HCT116 (cell line): ENCODE measurements at regions of chr7 and their contacts with region 1.

Region 1: GRCh38 chr7:110442381-110442837 is 648.5 kb upstream of the LRRN3 start:
- DNase-seq: peak; percentile 51
- ATAC-seq: peak; percentile 99
- H3K4me3 ChIP-seq: no peak overlapping the region
- H3K27ac ChIP-seq: no peak overlapping the region
- H3K4me1 ChIP-seq: no peaks in the 10 kb centered on the region
- H3K27me3 ChIP-seq: no peaks in the 10 kb centered on the region
- CTCF ChIP-seq: peak; percentile 43 to 81 (median 80); a peak in 5 of 6 replicates
- POLR2A ChIP-seq: no peak
- RAD21 ChIP-seq: peak; percentile 85

Region 2: GRCh38 chr7:108613112-108613759 is 1829.2 kb before region 1 on chr7:
- CTCF ChIA-PET with region 1: no interaction called
- POLR2A ChIA-PET with region 1: no interaction called
- RAD21 ChIA-PET with region 1: no interaction called
- intact Hi-C with region 1: loop called (anchors 10 kb)
- DNase-seq: peak; percentile 33
- ATAC-seq: peak; percentile 77
- H3K4me3 ChIP-seq: no peak overlapping the region
- H3K27ac ChIP-seq: no peak overlapping the region
- H3K4me1 ChIP-seq: no peaks in the 10 kb centered on the region
- H3K27me3 ChIP-seq: no peaks in the 10 kb centered on the region
- CTCF ChIP-seq: peak; percentile 49 to 78 (median 52)
- POLR2A ChIP-seq: no peak
- RAD21 ChIP-seq: peak; percentile 76

Region 3: DNA sequence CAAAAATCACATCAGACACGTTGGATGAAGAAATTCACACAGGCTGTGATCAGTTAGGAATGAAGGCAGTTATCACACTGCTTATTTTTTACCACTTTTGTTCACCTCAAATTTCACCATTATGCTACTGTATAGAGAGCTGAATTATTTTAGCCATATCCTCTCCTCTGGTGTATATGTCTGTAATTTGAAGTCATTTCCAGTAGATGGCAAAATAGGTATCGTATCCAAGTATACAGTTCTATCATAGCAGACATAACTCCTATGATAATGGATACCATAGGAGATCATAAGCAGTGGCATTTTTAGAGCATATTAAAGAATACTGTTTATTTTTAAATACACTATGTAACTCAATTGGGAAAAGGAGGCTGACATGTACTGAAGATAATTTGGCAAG is 963.0 kb before region 1 on chr7:
- CTCF ChIA-PET with region 1: no interaction called
- POLR2A ChIA-PET with region 1: no interaction called
- RAD21 ChIA-PET with region 1: no interaction called
- intact Hi-C with region 1: loop called (anchors 10 kb)
- DNase-seq: no peak
- ATAC-seq: peak; percentile 88
- H3K4me3 ChIP-seq: no peak overlapping the region
- H3K27ac ChIP-seq: no peak overlapping the region
- H3K4me1 ChIP-seq: no peaks in the 10 kb centered on the region
- H3K27me3 ChIP-seq: no peaks in the 10 kb centered on the region
- CTCF ChIP-seq: peak; percentile 10 to 37 (median 24); a peak in 3 of 6 replicates
- POLR2A ChIP-seq: no peak
- RAD21 ChIP-seq: peak; percentile 44

Region 4: GRCh38 chr7:109751241-109751640 is 691.2 kb before region 1 on chr7:
- CTCF ChIA-PET with region 1: no interaction called
- POLR2A ChIA-PET with region 1: no interaction called
- RAD21 ChIA-PET with region 1: no interaction called
- intact Hi-C with region 1: no loop called
- DNase-seq: peak; percentile 16
- ATAC-seq: peak; percentile 69
- H3K4me3 ChIP-seq: no peak overlapping the region
- H3K27ac ChIP-seq: no peak overlapping the region
- H3K4me1 ChIP-seq: peaks cover 0 to 10% of the 10 kb centered on the region in 2 experiments; a peak in 2 of 4 replicates
- H3K27me3 ChIP-seq: no peaks in the 10 kb centered on the region
- CTCF ChIP-seq: no peak
- POLR2A ChIP-seq: no peak
- RAD21 ChIP-seq: 0 out of 2 replicates have a peak, but pooled peaks have one; percentile 5

Region 5: DNA sequence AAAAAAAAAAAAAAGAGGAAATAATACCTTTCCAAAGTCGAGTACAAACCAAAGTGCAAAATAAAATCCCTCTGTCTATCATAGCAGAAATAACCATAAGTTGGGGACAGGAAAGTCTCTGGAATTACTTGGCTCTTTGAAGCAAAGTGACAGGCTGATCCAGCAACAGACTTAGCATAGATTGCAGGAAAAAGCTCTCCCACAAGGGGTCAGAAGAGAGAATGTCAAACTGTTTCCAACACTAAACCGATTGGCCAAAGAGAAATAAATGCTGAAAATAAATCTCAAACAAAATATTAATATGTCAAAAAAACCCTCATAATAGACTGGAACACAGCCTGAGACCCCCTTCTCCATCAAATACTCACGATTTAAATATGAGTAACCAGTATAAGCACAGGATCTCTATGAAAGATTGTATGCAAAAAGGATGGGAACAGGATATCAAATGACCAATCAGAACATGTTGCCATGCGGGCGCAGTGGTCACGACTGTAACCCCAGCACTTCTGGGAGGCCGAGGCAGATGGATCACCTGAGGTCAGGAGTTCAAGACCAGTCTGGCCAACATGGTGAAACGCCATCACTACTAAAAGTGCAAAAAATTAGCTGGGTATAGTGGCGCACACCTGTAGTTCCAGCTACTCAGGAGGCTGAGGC is 352.2 kb before region 1 on chr7:
- CTCF ChIA-PET with region 1: interaction called, 9 read pairs
- POLR2A ChIA-PET with region 1: no interaction called
- RAD21 ChIA-PET with region 1: no interaction called
- intact Hi-C with region 1: loop called (anchors 1 kb)
- DNase-seq: peak; percentile 38
- ATAC-seq: peak; percentile 81
- H3K4me3 ChIP-seq: no peak overlapping the region
- H3K27ac ChIP-seq: no peak overlapping the region
- H3K4me1 ChIP-seq: no peaks in the 10 kb centered on the region
- H3K27me3 ChIP-seq: no peaks in the 10 kb centered on the region
- CTCF ChIP-seq: peak; percentile 41 to 70 (median 65); a peak in 5 of 6 replicates
- POLR2A ChIP-seq: no peak
- RAD21 ChIP-seq: peak; percentile 61

Region 6: GRCh38 chr7:110461621-110462020 is 19.2 kb after region 1 on chr7:
- CTCF ChIA-PET with region 1: no interaction called
- POLR2A ChIA-PET with region 1: no interaction called
- RAD21 ChIA-PET with region 1: no interaction called
- intact Hi-C with region 1: no loop called
- DNase-seq: no peak
- ATAC-seq: no peak
- H3K4me3 ChIP-seq: no peak overlapping the region
- H3K27ac ChIP-seq: no peak overlapping the region
- H3K4me1 ChIP-seq: no peaks in the 10 kb centered on the region
- H3K27me3 ChIP-seq: no peaks in the 10 kb centered on the region
- CTCF ChIP-seq: no peak
- POLR2A ChIP-seq: no peak
- RAD21 ChIP-seq: no peak

Region 7: GRCh38 chr7:110645060-110645459 is 202.7 kb after region 1 on chr7:
- CTCF ChIA-PET with region 1: no interaction called
- POLR2A ChIA-PET with region 1: no interaction called
- RAD21 ChIA-PET with region 1: no interaction called
- intact Hi-C with region 1: no loop called
- DNase-seq: no peak
- ATAC-seq: no peak
- H3K4me3 ChIP-seq: no peak overlapping the region
- H3K27ac ChIP-seq: no peak overlapping the region
- H3K4me1 ChIP-seq: no peaks in the 10 kb centered on the region
- H3K27me3 ChIP-seq: no peaks in the 10 kb centered on the region
- CTCF ChIP-seq: no peak
- POLR2A ChIP-seq: no peak
- RAD21 ChIP-seq: no peak